Activated B cell treated with CpG ODN at 0.5 μM for 24 hours (primary cell): ENCODE measurements at regions of chr6 and their contacts with region 1.

Region 1: DNA sequence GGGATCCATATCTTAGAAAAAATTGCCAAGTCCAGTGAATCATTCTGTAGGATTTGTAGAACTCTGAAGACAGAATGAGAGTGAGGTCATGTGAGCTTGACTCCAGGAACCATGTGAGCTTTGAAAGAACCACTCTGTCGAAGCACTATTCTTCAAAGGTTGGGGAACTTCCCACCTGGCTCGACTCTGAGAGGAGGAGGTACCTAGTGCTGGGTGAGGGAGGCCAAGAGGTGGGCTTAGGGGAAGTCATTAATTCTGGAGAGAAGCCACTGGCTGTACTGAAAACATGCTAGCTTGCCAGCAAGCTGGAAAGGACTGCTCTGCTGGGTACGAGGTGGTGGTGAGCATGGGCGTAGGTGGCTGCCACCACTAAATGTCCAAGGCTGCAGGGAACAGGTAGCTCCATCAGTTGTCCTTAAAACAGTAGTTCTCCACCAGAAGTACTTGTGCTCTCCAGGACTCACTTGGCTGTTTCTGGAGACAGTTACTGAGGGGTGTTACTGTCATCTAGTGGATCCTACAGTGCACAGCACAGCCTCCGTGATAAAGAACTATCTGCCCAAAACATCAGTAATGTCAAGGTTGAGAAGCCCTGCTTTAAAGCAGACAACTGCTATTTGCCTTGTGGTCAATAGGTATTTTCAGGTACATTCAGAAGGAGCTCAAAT is 34.7 kb upstream of the SYNJ2 start:
- DNase-seq: no peak
- ATAC-seq: peak; percentile 42
- H3K4me3 Mint-ChIP-seq: no peak overlapping the region
- H3K27ac Mint-ChIP-seq: no peak overlapping the region
- H3K4me1 Mint-ChIP-seq: peaks cover 7% of the 10 kb centered on the region
- H3K27me3 Mint-ChIP-seq: no peaks in the 10 kb centered on the region
- CTCF ChIP-seq: no peak

Region 2: DNA sequence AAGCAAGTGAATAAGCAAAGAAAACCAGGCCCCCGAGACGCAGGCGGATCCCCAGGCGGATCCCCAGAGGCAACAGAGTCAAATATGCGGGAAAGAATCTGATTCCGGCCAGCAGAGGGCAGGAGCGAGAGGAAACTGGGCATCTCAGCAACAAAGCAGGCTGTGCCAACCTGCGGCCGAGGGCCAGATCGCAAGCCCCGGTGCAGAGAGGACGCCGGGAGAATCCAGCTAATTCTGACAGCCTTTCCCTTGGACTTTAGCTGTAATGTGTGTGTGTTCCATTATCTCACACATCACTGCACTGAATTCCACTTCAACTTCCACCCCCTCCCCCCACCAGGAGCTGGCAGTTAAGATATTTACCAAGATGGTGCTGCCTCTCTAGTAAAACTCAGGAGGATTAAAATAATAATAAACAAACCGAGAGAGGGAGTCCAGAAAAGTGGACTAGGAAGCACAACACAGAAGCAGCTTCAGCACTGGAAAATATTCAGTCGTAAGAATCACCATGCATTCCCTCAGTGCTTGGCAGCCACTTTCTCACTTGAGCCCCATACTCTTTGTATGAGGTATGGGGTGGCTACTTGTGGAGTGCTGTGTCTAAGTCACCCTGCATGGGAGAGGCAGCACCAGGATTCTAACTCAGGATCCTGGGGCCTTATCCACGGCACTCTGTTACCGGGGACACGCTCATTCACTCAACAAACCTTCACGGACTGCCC is 190.1 kb before region 1 on chr6:
- CTCF ChIA-PET with region 1: interaction called, 9 read pairs
- POLR2A ChIA-PET with region 1: no interaction called
- intact Hi-C with region 1: loop called (anchors 1 kb)
- DNase-seq: peak; percentile 72
- ATAC-seq: peak; percentile 54
- H3K4me3 Mint-ChIP-seq: peak overlapping the region; percentile 38
- H3K27ac Mint-ChIP-seq: no peak overlapping the region
- H3K4me1 Mint-ChIP-seq: peaks cover 69% of the 10 kb centered on the region
- H3K27me3 Mint-ChIP-seq: peaks cover 6% of the 10 kb centered on the region
- CTCF ChIP-seq: peak; percentile 60

Region 3: GRCh38 chr6:157928428-157928827 is 18.6 kb before region 1 on chr6:
- CTCF ChIA-PET with region 1: no interaction called
- POLR2A ChIA-PET with region 1: no interaction called
- intact Hi-C with region 1: no loop called
- DNase-seq: no peak
- ATAC-seq: no peak
- H3K4me3 Mint-ChIP-seq: no peak overlapping the region
- H3K27ac Mint-ChIP-seq: no peak overlapping the region
- H3K4me1 Mint-ChIP-seq: no peaks in the 10 kb centered on the region
- H3K27me3 Mint-ChIP-seq: no peaks in the 10 kb centered on the region
- CTCF ChIP-seq: no peak